ENCODE measurements at regions of chr1 and their contacts with region 1.

Region 1: GRCh38 chr1:84442256-84442655 is 36.8 kb upstream of the RPF1 start:
- DNase-seq: no peak
- H3K4me3 ChIP-seq: no peak overlapping the region
- H3K27ac ChIP-seq: no peak overlapping the region
- H3K4me1 ChIP-seq: no peaks in the 10 kb centered on the region
- H3K27me3 ChIP-seq: peaks cover 0 to 10% (median 0%) of the 10 kb centered on the region in 4 donors
- CTCF ChIP-seq: peak; percentile 45 to 63 (median 46)
- EP300 ChIP-seq: no peak
- POLR2A ChIP-seq: no peak

Region 2: GRCh38 chr1:84772428-84772943 is 330.2 kb after region 1 on chr1:
- intact Hi-C with region 1: loop called (anchors 5 kb)
- DNase-seq: no peak
- H3K4me3 ChIP-seq: no peak overlapping the region
- H3K27ac ChIP-seq: no peak overlapping the region
- H3K4me1 ChIP-seq: peaks cover 0 to 4% (median 0%) of the 10 kb centered on the region in 4 donors
- H3K27me3 ChIP-seq: no peaks in the 10 kb centered on the region
- CTCF ChIP-seq: peak; percentile 86 to 95 (median 93)
- EP300 ChIP-seq: no peak
- POLR2A ChIP-seq: no peak

Measured in esophagus muscularis mucosa (tissue), 4 donors.